ENCODE measurements at regions of chr12 and their contacts with region 1.

Region 1: DNA sequence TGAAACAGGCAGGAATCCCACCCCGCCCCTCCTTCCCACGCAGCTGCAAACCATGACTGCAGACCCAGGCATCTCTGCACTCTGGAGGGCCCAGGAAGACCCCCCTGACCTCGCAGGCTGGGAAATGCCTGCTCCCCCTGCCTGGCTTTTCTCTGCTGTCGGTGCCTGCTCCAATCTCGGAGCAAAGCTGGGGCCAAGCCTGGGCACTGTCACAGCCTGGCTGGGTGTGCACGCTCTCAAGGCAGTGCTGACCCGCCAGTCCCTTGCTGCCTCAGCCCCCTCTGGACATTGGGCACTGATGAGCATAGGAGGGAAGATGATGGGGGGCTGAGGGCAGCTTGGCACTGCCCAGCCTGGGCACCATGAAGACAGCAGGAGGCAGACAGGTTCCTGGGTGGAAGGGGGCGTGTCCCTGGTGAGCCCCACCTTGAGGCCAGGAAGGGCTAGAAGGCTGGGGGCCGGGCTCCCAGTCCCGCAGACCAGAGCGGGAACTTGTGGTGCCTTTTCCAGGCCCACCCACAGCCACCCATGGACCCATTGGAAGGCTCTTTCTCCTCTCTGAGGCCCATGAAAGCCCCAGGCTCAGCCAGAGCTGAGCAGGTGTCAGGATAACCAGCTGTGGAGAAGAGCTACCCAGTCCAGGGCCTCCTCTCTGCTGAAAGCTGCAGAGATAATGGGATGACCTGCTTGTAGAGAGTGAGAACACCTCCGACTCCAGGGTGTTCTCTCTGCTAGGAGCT is 10.7 kb upstream of the ZNF605 start:
- DNase-seq: no peak
- ATAC-seq: no peak
- H3K4me3 ChIP-seq: no peak overlapping the region
- H3K27ac ChIP-seq: no peak overlapping the region
- H3K4me1 ChIP-seq: no peaks in the 10 kb centered on the region
- H3K27me3 ChIP-seq: no peaks in the 10 kb centered on the region
- CTCF ChIP-seq: no peak
- EP300 ChIP-seq: no peak
- POLR2A ChIP-seq: no peak
- RAD21 ChIP-seq: no peak

Region 2: DNA sequence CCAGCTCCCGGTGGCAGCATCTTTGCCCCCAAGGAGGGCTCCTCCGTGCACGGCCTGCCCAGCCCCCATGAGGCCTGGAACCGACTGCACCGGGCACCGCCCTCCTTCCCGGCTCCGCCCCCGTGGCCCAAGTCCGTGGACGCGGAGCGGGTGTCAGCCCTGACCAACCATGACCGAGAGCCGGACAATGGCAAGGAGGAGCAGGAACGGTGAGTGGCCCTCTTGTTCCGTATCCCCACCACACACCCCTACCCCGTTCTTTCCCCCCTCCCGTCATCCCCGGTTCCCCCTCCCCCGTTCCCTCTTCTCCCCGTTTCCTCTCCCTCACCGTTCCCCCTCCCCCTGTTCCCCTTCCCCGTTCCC is 384.8 kb before region 1 on chr12:
- CTCF ChIA-PET with region 1: no interaction called
- POLR2A ChIA-PET with region 1: no interaction called
- in situ Hi-C with region 1: no loop called
- intact Hi-C with region 1: no loop called
- DNase-seq: no peak
- ATAC-seq: no peak
- H3K4me3 ChIP-seq: no peak overlapping the region
- H3K27ac ChIP-seq: no peak overlapping the region
- H3K4me1 ChIP-seq: peaks cover 0 to 21% of the 10 kb centered on the region in 2 experiments; a peak in 2 of 5 replicates
- H3K27me3 ChIP-seq: no peaks in the 10 kb centered on the region
- CTCF ChIP-seq: no peak
- EP300 ChIP-seq: no peak
- POLR2A ChIP-seq: no peak
- RAD21 ChIP-seq: no peak

Region 3: DNA sequence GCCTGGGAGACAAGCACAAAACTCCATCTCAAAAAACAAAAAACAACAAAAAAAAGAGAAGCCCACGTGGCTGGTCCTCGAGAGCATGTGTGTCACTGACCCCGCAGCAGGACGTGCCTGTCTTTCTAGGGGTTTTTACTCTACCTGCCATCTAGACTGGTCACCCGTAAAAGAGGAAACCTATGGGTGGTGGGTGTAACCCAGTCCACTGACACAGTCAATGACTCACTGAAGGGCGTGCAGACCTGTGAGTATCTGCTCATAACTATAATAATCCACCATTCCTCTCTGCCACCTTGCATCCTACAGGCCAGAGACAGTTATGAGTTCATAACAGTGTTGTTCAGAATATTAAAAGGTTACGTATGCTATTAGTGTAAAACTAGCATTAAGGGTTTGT is 142.8 kb before region 1 on chr12:
- CTCF ChIA-PET with region 1: no interaction called
- POLR2A ChIA-PET with region 1: no interaction called
- in situ Hi-C with region 1: no loop called
- intact Hi-C with region 1: no loop called
- DNase-seq: no peak
- ATAC-seq: no peak
- H3K4me3 ChIP-seq: no peak overlapping the region
- H3K27ac ChIP-seq: no peak overlapping the region
- H3K4me1 ChIP-seq: peaks cover 6 to 18% of the 10 kb centered on the region in 2 experiments; a peak in 3 of 5 replicates
- H3K27me3 ChIP-seq: no peaks in the 10 kb centered on the region
- CTCF ChIP-seq: no peak
- EP300 ChIP-seq: no peak
- POLR2A ChIP-seq: no peak
- RAD21 ChIP-seq: no peak

Region 4: DNA sequence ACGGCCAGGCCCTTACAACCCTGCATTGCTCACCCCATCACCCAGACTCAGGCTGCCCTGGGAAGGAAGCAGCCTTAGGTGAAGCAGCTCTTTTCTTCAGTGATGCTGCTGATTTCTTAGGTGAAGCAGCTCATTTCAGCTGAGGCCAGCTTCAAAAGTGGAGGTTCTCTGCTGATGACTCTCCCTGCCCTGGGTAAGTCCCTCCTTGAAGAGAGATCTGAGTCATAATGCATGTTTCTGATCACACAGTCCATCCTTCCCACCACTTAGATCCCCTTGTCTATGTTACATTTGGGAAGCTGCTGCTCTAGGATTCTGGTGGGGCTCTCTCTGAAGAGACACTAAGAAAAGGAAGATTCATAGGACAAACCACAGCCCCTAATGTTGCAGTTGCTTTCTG is 96.7 kb after region 1 on chr12:
- CTCF ChIA-PET with region 1: no interaction called
- POLR2A ChIA-PET with region 1: no interaction called
- in situ Hi-C with region 1: no loop called
- intact Hi-C with region 1: loop called (anchors 10 kb)
- DNase-seq: no peak
- ATAC-seq: no peak
- H3K4me3 ChIP-seq: no peak overlapping the region
- H3K27ac ChIP-seq: no peak overlapping the region
- H3K4me1 ChIP-seq: no peaks in the 10 kb centered on the region
- H3K27me3 ChIP-seq: no peaks in the 10 kb centered on the region
- CTCF ChIP-seq: no peak
- EP300 ChIP-seq: no peak
- POLR2A ChIP-seq: no peak
- RAD21 ChIP-seq: no peak